ENCODE measurements at regions of chr15 and their contacts with region 1.

Region 1: DNA sequence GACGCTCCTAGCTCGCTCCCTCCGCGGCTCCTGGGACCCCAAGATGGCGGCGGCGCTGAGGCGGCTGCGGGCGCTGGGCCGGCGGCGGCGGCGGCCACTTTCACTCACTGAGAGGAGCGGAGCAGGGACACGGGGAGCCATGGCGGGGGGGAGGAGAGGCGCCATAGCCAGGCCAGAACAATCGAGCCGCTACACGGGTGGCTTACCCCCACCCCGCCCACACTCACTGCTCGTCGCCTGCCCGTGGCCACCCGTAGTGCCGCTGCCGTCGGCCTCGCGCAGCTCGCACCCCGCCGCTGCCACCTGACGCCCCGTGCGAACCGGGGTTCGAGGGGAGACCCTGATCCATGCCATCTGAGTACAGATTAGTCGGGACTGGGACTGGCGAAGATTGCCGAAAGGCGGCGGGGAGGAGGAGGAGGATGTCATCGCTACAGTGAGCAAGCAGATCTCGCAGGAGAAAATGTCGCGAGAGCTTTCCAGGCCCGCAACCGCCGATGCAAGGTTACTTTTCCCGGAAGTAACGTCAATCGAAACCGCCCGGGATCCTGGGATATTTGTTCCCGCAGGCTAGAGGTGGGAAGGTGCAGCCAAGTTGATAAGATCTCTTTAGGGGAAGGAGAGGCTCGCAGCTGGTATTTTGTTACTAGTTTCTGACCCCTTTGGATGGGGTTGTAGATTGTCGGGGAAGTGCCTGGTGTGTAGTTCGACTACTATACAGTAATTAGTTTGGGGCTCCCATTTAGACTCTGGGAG is at the start of gene INO80:
- DNase-seq: peak; percentile 99
- total RNA-seq, gene INO80: 13.3 TPM

Region 2: DNA sequence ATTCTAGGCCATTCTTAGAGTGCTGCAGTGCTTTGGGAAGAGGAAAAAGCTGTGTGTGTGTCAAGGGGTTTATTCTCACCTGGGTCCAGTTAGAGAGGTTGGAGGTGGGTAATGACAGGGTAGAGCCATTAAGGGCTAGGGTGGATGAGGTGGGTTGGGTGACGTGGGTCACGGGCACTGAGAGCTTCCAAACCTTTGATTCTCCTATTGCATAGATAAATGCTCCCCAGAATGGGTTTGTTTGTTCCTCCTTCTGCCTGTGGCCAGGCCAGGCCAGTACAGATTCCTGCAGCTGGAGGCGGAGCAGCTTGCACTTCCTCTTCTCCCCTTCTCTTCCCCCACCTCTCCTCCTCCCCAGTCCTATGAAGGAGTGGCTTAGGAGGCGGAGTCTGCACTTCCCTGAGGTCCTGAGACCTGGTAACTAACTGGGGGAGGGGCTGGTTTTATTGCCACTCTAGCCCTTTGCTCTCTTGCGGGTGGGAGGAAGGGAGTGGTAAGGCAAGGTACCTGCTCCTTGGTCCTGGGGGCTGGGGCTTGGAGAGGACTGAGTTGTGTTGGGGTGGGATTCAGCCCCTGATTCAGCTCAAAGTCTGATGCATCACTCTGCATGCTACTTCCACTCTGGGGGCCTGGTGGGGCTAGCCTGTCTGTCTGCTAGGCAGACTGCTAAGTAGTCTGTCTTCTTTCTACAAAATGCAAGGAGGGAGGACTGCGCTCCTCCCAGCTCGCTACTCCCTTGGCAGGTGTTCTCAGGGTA is 268.9 kb before region 1 on chr15:
- intact Hi-C with region 1: no loop called
- DNase-seq: peak; percentile 84

Region 3: DNA sequence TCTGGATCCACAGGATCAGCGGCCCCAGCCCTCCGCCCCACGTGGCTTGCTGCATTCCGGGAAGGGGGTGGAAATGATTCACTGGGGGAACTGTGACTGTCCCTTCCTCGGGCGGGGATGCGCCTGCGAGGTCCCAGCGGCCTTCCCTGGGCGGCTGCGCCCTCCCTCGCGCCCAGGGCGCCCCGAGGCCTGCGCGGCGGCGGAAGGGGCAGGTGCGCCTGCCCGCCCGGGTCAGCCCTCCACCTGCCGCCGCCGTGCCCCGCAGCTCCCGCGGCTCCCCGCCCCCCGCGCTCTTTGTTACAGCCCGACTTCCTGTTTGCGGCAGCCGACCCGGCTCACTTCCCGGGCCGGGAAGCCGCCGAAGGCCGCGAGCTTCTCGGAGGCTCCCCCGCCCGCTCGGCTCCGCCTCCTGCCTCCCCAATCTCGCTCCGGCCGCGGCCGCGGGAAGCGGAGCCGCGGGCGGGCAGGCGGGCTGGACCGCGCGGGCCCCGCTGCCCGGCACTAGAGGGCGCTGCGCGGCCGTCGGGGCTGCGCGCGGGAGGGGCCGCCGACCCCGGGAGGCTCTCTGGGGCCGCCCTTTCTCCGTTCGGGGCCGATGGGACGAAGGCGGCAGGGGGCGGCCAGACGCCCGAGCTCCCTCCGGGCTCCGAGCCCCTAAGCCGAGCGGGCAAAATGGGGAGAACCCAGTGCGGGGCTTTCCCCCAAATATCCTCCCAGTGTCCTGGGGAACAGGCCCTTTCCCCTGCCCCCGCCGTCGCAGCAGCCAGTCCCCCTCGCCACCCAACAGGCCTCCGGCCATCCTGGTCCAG is 174.6 kb before region 1 on chr15:
- intact Hi-C with region 1: loop called (anchors 10 kb)
- DNase-seq: peak; percentile 91

Region 4: GRCh38 chr15:41230650-41231533 is 114.6 kb after region 1 on chr15 and contains the starts of genes CHP1 and EXD1:
- intact Hi-C with region 1: loop called (anchors 2 kb)
- DNase-seq: peak; percentile 99
- total RNA-seq, gene CHP1: 104 TPM
- total RNA-seq, gene EXD1: not detected

Region 5: DNA sequence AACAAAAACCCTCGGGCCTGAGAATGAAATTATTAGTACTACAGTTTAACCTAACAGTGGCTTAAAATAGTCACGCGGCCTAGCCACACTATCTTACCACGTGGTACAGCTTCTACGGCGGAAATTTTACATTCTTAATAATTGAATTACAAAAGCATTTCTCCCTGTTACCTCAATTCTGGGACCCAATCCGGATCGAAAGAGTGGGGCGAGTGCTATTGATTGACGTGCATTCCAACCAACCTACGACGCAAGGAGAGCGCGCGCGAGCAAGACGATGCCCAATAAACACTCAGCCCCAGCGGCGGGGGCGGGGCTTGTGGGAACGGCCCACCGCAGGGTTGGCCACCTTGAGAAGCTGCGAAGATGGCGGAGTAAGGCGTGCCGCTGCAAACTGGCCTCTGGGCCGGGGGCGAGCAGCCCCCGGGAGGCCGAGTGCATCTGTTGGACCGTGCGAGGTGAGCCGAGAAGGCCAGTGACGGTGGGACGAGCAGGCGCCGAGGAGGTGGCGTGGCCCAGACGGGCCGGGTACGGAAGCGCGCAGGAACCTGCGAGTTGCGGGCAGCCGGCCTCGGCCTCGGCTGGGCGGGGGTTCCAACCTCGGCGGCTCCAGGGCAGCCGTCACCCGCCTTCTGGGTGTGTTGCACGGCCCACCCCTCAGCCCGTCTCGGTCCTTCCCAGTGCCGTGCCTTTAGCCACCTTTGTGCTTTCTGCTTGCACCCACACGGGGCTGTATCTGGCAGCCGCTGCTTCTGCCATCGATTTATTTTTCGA is 167.5 kb after region 1 on chr15:
- intact Hi-C with region 1: loop called (anchors 5 kb)
- DNase-seq: peak; percentile 98

Region 6: GRCh38 chr15:41331833-41332787 is 215.8 kb after region 1 on chr15 and contains the start of gene OIP5:
- intact Hi-C with region 1: loop called (anchors 10 kb)
- DNase-seq: peak; percentile 99
- total RNA-seq, gene OIP5: not detected

Region 7: GRCh38 chr15:41621200-41622193 is 505.2 kb after region 1 on chr15:
- intact Hi-C with region 1: no loop called
- DNase-seq: peak; percentile 88

Measured in cardiac septum (tissue), 1 donor.